OCI-LY7 (cell line): ENCODE measurements at regions of chr9 and their contacts with region 1.

Region 1: GRCh38 chr9:95494416-95495371 is 22.1 kb downstream of the PTCH1 start:
- DNase-seq: peak; percentile 98
- H3K4me3 ChIP-seq: peak overlapping the region; percentile 63
- H3K27ac ChIP-seq: peak overlapping the region; percentile 95
- H3K4me1 ChIP-seq: peaks cover 66% of the 10 kb centered on the region
- CTCF ChIP-seq: no peak

Region 2: GRCh38 chr9:95317119-95317892 is 177.4 kb before region 1 on chr9 and contains the start of gene FANCC:
- CTCF ChIA-PET with region 1: no interaction called
- POLR2A ChIA-PET with region 1: interaction called, 5 read pairs
- intact Hi-C with region 1: loop called (anchors 5 kb)
- DNase-seq: peak; percentile 91
- H3K4me3 ChIP-seq: peak within 1 kb of the TSS; percentile 79
- H3K27ac ChIP-seq: peak within 1 kb of the TSS; percentile 84
- H3K4me1 ChIP-seq: peaks cover 14% of the 10 kb centered on the region
- CTCF ChIP-seq: 0 out of 2 replicates have a peak, but pooled peaks have one; percentile 24
- total RNA-seq, gene FANCC: 12.3 and 13.9 TPM in 2 replicates

Region 3: DNA sequence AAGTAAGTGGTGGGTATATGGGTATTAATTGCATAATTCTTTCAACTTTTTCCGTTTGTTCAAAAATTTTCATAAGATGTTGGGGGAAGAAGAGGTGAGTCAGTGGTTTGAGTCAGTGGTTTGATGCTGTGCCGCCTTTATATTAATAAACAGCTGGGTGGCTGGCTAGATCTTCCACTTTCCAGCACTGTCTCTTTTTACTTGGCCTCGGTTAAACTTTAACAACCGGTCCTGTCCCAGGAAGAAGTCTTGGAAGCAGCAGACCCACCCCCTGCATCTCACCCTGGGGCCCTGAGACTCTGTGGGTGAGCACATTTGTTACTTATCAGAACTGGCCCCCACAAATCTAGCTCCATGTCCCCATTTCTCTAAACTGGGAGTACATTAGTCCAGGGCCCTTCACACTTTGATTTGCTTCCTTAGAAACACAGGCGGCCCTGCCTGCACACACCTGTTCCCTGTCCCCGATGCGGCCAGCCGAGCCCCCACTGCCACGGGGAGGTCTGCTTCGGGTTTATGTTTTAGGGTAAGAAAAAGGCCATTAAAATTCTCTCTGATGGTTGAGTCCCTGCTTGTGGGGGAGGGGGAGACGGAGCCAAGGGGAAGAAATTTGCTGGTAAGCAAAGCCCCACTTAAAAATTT is 68.7 kb before region 1 on chr9:
- CTCF ChIA-PET with region 1: no interaction called
- POLR2A ChIA-PET with region 1: interaction called, 4 read pairs
- intact Hi-C with region 1: loop called (anchors 2 kb)
- DNase-seq: peak; percentile 47
- H3K4me3 ChIP-seq: peak overlapping the region; percentile 71
- H3K27ac ChIP-seq: peak overlapping the region; percentile 60
- H3K4me1 ChIP-seq: peaks cover 14% of the 10 kb centered on the region
- CTCF ChIP-seq: no peak

Region 4: DNA sequence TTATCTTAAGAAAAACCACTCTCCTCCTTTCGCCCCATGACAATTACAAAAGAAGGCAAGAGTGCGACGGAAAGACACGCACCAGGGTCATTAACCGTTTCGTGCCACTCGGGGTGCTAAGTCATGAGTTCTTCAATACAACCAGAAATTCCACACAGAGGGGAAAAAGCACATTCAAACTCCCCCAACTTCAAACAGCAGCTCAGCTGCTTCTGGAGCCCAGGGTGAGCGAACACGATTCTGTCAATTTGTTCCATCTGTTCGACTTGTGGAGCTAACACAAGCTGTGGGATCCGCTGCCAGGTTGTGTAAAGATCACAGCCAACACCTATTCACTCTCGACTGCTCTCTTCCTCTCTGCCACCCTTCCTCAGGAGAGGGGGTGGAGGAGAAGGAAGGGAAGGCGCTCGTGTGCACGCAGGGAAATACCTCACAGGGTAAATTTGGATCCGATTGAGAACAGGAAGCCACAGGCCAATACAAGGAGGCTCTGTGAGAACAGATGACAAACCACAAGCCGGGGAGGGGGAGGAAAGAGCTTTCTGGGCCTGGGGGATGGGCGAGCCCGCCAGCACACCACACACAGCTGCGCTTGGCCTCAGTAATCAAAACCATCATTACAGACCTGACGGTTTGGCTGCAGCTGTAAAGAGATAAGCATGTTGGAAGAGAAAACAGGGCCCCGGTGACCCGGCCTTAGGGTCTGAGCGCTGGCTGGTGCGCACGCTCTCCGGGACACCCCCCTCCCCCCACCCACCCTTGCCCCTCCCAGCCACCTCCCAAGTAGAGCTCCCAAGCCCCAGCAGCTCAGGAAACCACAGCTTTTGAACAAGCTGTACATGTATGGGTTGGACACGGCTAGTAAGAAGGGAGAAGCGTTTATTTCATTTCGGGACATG is 32.2 kb before region 1 on chr9:
- CTCF ChIA-PET with region 1: interaction called, 7 read pairs
- POLR2A ChIA-PET with region 1: interaction called, 33 read pairs
- intact Hi-C with region 1: loop called (anchors 1 kb)
- DNase-seq: peak; percentile 97
- H3K4me3 ChIP-seq: peak overlapping the region; percentile 65
- H3K27ac ChIP-seq: peak overlapping the region; percentile 100
- H3K4me1 ChIP-seq: peaks cover 48% of the 10 kb centered on the region
- CTCF ChIP-seq: no peak

Region 5: GRCh38 chr9:95545831-95546567 is 51.3 kb after region 1 on chr9:
- CTCF ChIA-PET with region 1: no interaction called
- POLR2A ChIA-PET with region 1: no interaction called
- intact Hi-C with region 1: no loop called
- DNase-seq: no peak
- H3K4me3 ChIP-seq: no peak overlapping the region
- H3K27ac ChIP-seq: no peak overlapping the region
- H3K4me1 ChIP-seq: no peaks in the 10 kb centered on the region
- CTCF ChIP-seq: no peak

Region 6: DNA sequence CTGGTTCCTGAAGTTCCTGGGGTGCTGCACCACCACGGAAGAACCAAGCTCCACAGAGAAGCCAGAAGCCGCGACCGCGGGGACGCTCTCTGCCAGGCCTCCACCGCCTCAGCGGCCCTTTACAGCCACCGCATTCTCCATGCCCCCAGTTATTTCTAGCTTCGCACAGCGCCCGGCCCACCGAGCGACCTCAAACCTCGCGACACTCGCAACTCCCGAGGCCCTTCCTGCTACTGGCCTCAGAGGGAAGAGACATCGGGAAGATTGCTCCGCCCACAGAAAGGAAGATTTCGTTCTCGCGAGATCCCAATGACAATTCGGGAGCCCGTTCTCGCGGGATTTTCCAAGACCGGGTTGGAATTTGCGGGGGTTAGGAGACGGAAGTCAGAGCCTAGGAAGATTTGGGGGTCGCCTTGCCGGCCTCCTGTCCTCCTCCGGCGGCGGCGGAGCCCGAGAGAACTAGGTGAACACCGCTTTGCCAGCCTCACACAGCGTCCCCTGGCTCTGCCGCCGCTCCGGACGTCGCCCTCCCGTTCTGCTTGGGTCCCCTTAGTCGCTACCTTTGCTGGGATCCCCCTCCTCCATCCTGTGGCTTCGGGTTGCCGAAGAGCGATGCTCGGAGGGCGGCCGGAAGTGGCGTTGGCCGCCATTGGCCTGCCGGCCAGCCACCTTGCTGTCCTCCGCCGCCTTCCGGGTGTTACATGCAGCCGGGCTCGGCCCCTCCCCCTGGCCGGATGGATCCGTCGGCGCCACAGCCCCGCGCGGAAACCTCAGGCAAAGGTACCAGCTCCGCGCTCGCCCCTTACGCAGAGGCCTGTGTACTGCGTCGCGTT is 380.8 kb after region 1 on chr9 and contains the start of gene ERCC6L2:
- CTCF ChIA-PET with region 1: no interaction called
- POLR2A ChIA-PET with region 1: no interaction called
- intact Hi-C with region 1: loop called (anchors 5 kb)
- DNase-seq: peak; percentile 97
- H3K4me3 ChIP-seq: no peak within 1 kb of the TSS
- H3K27ac ChIP-seq: no peak within 1 kb of the TSS
- H3K4me1 ChIP-seq: peaks cover 8% of the 10 kb centered on the region
- CTCF ChIP-seq: no peak
- total RNA-seq, gene ERCC6L2: 34.9 and 41.0 TPM in 2 replicates

Region 7: GRCh38 chr9:96383165-96383942 is 888.7 kb after region 1 on chr9 and contains the start of gene SLC35D2:
- CTCF ChIA-PET with region 1: no interaction called
- POLR2A ChIA-PET with region 1: no interaction called
- intact Hi-C with region 1: no loop called
- DNase-seq: no peak
- H3K4me3 ChIP-seq: no peak within 1 kb of the TSS
- H3K27ac ChIP-seq: no peak within 1 kb of the TSS
- H3K4me1 ChIP-seq: no peaks in the 10 kb centered on the region
- CTCF ChIP-seq: no peak
- total RNA-seq, gene SLC35D2: 0.44 and 1.4 TPM in 2 replicates